ENCODE measurements at regions of chr5 and their contacts with region 1.

Region 1: DNA sequence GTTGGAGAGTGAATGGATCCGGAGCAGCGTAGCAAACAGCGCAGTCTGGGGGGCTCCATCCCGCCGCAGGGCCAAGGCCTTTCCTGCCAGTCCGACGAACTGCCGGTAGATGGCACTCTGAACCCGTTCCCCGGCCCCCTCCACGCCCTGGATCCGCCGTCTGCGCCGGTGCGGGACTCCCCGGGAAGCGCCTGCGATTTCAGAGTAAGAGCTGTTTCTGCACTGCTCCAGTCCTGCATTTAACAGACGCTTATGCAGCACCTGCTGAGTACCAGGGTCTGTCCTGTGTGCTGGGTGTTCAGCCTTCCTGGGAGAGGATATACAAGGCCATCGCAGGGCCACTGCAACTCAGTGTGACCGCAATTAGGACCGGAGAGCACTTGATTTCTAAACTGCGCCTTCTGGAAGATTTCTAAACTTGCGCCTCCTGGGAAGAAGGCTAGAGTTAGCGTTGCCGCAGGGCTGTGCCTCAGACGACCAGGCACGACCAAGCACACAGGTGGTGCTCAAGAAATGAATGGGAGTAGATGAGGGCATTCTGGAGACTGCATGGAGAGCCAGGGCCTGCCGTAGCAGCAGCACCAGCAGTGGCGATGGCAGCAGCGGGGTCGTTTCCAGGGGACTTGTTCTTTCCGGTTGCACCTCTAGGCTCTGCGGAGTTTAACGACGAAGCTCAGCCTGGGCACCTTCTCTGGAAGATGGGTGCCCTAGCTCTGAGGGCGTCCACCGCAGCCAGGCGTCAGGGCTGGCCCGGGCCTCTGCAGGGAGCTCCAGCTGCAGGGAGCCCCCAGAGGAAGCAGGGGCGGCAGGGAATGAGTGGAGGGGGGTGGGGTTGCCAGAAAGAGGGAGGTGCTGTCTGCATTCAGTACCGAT is 14.3 kb upstream of the TIFAB start:
- DNase-seq: peak; percentile 56
- ATAC-seq: peak; percentile 99
- H3K4me3 ChIP-seq: 0 out of 2 replicates have a peak overlapping the region, but pooled peaks have one; percentile 10
- H3K27ac ChIP-seq: no peak overlapping the region
- H3K4me1 ChIP-seq: no peaks in the 10 kb centered on the region
- H3K27me3 ChIP-seq: peaks cover 72% of the 10 kb centered on the region
- CTCF ChIP-seq: peak; percentile 96
- POLR2A ChIP-seq: peak; percentile 53; the same call in 1 of the 2 replicates
- RAD21 ChIP-seq: peak; percentile 97

Region 2: GRCh38 chr5:135526924-135527323 is 60.5 kb after region 1 on chr5:
- CTCF ChIA-PET with region 1: no interaction called
- POLR2A ChIA-PET with region 1: no interaction called
- dilution Hi-C with region 1: no loop called
- in situ Hi-C with region 1: no loop called
- intact Hi-C with region 1: no loop called
- DNase-seq: no peak
- ATAC-seq: no peak
- H3K4me3 ChIP-seq: no peak overlapping the region
- H3K27ac ChIP-seq: no peak overlapping the region
- H3K4me1 ChIP-seq: no peaks in the 10 kb centered on the region
- H3K27me3 ChIP-seq: peaks cover 33% of the 10 kb centered on the region
- CTCF ChIP-seq: no peak
- POLR2A ChIP-seq: no peak
- RAD21 ChIP-seq: no peak

Region 3: DNA sequence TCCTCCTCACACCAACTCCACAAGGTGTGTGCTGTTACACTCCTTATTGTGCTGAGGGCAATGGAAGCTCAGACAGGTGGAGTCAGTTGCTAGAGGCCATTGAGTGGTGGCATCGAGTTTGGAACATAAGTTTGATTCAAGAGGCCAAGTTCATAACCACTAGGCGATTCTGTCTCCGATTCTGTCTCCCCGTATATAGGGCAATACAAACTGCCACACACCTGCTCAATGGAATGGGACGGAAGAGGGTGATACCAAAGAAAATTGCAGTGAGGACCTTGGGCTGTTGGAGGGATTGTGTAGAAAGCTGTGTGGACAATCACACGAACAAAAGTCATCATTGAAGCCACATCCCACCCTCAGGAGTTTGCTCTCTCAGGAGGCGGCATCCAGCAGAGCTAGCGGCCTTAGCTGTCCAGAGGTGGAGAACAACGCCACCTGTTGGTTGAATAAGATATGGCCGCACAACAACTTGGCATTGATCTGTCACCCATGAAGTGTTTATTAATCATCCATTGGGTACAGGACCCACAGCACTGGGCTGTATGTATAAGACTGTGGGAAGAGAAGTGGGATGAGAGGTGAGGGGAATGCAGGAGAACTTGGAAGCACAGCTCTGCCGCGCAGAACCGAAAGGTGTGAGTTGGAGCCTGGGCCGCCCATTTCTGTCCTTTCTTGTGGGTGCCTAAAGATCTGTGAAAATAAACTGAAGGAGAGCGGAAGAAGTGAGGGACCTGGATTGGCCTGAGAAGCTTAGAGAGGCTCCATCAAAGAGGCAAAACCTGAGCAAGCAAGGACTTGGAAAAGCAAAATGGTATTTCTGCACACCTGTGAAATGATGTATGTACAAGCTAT is 85.4 kb after region 1 on chr5:
- CTCF ChIA-PET with region 1: interaction called, 108 read pairs
- POLR2A ChIA-PET with region 1: no interaction called
- dilution Hi-C with region 1: loop called (anchors 25 kb)
- in situ Hi-C with region 1: loop called (anchors 5 kb)
- intact Hi-C with region 1: loop called (anchors 1 kb)
- DNase-seq: peak; percentile 75
- ATAC-seq: peak; percentile 92
- H3K4me3 ChIP-seq: no peak overlapping the region
- H3K27ac ChIP-seq: no peak overlapping the region
- H3K4me1 ChIP-seq: no peaks in the 10 kb centered on the region
- H3K27me3 ChIP-seq: peaks cover 59% of the 10 kb centered on the region
- CTCF ChIP-seq: peak; percentile 91
- POLR2A ChIP-seq: no peak
- RAD21 ChIP-seq: peak; percentile 91

Region 4: GRCh38 chr5:135560858-135561257 is 94.4 kb after region 1 on chr5:
- CTCF ChIA-PET with region 1: interaction called, 36 read pairs
- POLR2A ChIA-PET with region 1: no interaction called
- dilution Hi-C with region 1: loop called (anchors 25 kb)
- in situ Hi-C with region 1: no loop called
- intact Hi-C with region 1: no loop called
- DNase-seq: peak; percentile 70
- ATAC-seq: peak; percentile 99
- H3K4me3 ChIP-seq: no peak overlapping the region
- H3K27ac ChIP-seq: no peak overlapping the region
- H3K4me1 ChIP-seq: no peaks in the 10 kb centered on the region
- H3K27me3 ChIP-seq: peaks cover 26% of the 10 kb centered on the region
- CTCF ChIP-seq: peak; percentile 80
- POLR2A ChIP-seq: no peak
- RAD21 ChIP-seq: peak; percentile 72

Region 5: DNA sequence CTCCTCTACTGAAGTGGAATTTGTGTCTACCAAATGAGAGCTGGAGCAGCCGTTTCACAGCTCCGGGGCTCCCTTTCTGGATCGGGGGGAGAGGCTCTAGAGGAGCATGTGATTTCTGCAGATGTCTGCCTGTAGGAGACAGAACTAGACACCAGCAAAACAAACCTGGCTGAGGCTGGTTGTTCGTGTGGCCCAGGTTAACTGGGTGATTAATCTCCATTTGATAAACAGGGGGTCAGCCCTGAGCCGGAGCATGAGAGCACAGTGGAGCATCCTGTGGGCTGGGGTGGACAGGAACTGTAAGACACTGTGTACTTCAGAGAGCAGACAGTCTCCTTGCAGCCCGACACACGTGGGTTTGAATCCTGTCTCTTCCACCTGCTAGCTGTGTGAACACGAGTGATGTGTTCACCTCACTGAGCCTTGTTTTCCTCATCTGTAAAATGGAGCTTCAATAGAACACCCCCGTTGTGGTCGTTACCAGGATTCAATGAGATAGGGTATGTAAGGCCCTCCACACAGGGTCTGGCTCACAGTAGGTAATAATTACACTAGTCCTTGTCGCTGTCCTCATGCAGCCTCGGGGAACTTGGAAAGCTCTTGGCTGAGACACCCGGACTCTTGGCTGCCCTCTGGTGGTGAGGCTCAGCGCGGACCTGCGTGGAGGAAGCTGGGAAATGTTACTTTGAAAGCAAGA is 99.5 kb after region 1 on chr5:
- CTCF ChIA-PET with region 1: interaction called, 36 read pairs
- POLR2A ChIA-PET with region 1: no interaction called
- dilution Hi-C with region 1: loop called (anchors 25 kb)
- in situ Hi-C with region 1: no loop called
- intact Hi-C with region 1: no loop called
- DNase-seq: peak; percentile 52
- ATAC-seq: peak; percentile 74
- H3K4me3 ChIP-seq: no peak overlapping the region
- H3K27ac ChIP-seq: no peak overlapping the region
- H3K4me1 ChIP-seq: no peaks in the 10 kb centered on the region
- H3K27me3 ChIP-seq: peaks cover 17% of the 10 kb centered on the region
- CTCF ChIP-seq: peak; percentile 80
- POLR2A ChIP-seq: no peak
- RAD21 ChIP-seq: peak; percentile 44

Region 6: GRCh38 chr5:135829681-135830383 is 363.4 kb after region 1 on chr5:
- CTCF ChIA-PET with region 1: interaction called, 3 read pairs
- POLR2A ChIA-PET with region 1: no interaction called
- dilution Hi-C with region 1: no loop called
- in situ Hi-C with region 1: loop called (anchors 10 kb)
- intact Hi-C with region 1: loop called (anchors 1 kb)
- DNase-seq: peak; percentile 31
- ATAC-seq: peak; percentile 73
- H3K4me3 ChIP-seq: no peak overlapping the region
- H3K27ac ChIP-seq: no peak overlapping the region
- H3K4me1 ChIP-seq: no peaks in the 10 kb centered on the region
- H3K27me3 ChIP-seq: peaks cover 36% of the 10 kb centered on the region; the same call in 1 of the 2 replicates
- CTCF ChIP-seq: peak; percentile 74
- POLR2A ChIP-seq: no peak
- RAD21 ChIP-seq: peak; percentile 69

Measured in IMR-90 (cell line).